Calu3 (cell line): ENCODE measurements at regions of chr17 and their contacts with region 1.

Region 1: GRCh38 chr17:40956401-40957254 is 10.1 kb downstream of the KRT39 start:
- DNase-seq: peak; percentile 88
- H3K4me3 Mint-ChIP-seq: peak overlapping the region; percentile 27
- H3K27ac Mint-ChIP-seq: peak overlapping the region; percentile 94
- H3K4me1 Mint-ChIP-seq: peaks cover 97% of the 10 kb centered on the region
- H3K27me3 Mint-ChIP-seq: no peaks in the 10 kb centered on the region
- CTCF ChIP-seq: no peak

Region 2: GRCh38 chr17:40915199-40915661 is 41.4 kb before region 1 on chr17:
- CTCF ChIA-PET with region 1: interaction called, 14 read pairs
- intact Hi-C with region 1: loop called (anchors 1 kb)
- DNase-seq: no peak
- H3K4me3 Mint-ChIP-seq: peak overlapping the region; percentile 31
- H3K27ac Mint-ChIP-seq: peak overlapping the region; percentile 96
- H3K4me1 Mint-ChIP-seq: peaks cover 84% of the 10 kb centered on the region
- H3K27me3 Mint-ChIP-seq: no peaks in the 10 kb centered on the region
- CTCF ChIP-seq: no peak

Region 3: GRCh38 chr17:41024697-41025096 is 68.1 kb after region 1 on chr17:
- CTCF ChIA-PET with region 1: interaction called, 3 read pairs
- intact Hi-C with region 1: loop called (anchors 5 kb)
- DNase-seq: no peak
- H3K4me3 Mint-ChIP-seq: no peak overlapping the region
- H3K27ac Mint-ChIP-seq: peak overlapping the region; percentile 13
- H3K4me1 Mint-ChIP-seq: peaks cover 37% of the 10 kb centered on the region
- H3K27me3 Mint-ChIP-seq: no peaks in the 10 kb centered on the region
- CTCF ChIP-seq: no peak

Region 4: DNA sequence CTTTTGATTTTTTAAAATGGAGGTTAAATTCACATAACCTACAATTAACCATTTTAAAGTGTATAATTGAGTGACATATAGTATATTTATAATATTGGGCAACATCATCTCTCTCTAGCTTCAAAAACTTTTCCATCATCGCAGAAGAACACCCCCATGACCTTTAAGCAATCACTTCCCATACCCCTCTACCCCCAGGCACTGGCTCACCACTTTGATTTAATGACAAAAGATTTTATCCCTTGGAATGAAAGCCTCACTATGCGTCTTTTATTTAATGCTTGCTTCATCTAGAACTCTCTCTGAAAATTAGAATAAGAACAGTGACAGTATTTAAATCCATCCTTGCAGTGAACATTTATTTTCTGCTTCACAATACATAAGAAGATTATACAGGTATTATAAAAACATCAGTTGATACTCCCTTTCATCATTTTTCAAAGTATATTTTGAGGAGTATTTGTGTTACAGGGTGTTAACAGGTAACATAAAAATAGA is 81.3 kb after region 1 on chr17:
- CTCF ChIA-PET with region 1: interaction called, 10 read pairs
- intact Hi-C with region 1: loop called (anchors 1 kb)
- DNase-seq: no peak
- H3K4me3 Mint-ChIP-seq: no peak overlapping the region
- H3K27ac Mint-ChIP-seq: no peak overlapping the region
- H3K4me1 Mint-ChIP-seq: peaks cover 49% of the 10 kb centered on the region
- H3K27me3 Mint-ChIP-seq: no peaks in the 10 kb centered on the region
- CTCF ChIP-seq: no peak

Region 5: DNA sequence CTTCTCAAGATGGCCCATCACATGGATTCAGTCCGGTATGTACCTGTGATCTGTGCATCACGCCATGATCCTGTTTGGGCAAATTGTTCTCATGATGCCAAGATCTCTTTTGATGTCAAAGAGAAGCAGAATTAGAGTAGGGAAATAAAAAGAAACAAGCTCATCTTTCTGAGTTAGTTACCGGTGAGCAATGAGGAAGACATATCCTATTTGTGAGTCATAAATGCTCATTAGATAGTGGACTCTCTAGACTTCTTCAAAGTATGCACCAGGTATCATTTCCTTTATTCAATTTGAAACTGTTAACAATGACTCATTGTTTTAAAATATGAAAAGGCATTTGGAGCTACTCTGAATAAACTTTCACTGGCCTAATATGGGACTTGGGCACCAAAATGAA is 175.4 kb after region 1 on chr17:
- CTCF ChIA-PET with region 1: interaction called, 3 read pairs
- intact Hi-C with region 1: loop called (anchors 5 kb)
- DNase-seq: no peak
- H3K4me3 Mint-ChIP-seq: no peak overlapping the region
- H3K27ac Mint-ChIP-seq: peak overlapping the region; percentile 57
- H3K4me1 Mint-ChIP-seq: peaks cover 44% of the 10 kb centered on the region
- H3K27me3 Mint-ChIP-seq: no peaks in the 10 kb centered on the region
- CTCF ChIP-seq: no peak